Activated CD4-positive, alpha-beta T cell treated with anti-CD3 and anti-CD28 coated beads for 36 hours (primary cell): ENCODE measurements at regions of chr7 and their contacts with region 1.

Region 1: GRCh38 chr7:84876061-84876821 is 310.6 kb downstream of the SEMA3D start:
- DNase-seq: no peak
- ATAC-seq: no peak
- H3K4me3 Mint-ChIP-seq: no peak overlapping the region
- H3K27ac Mint-ChIP-seq: no peak overlapping the region
- H3K4me1 Mint-ChIP-seq: no peaks in the 10 kb centered on the region
- H3K27me3 Mint-ChIP-seq: no peaks in the 10 kb centered on the region

Region 2: DNA sequence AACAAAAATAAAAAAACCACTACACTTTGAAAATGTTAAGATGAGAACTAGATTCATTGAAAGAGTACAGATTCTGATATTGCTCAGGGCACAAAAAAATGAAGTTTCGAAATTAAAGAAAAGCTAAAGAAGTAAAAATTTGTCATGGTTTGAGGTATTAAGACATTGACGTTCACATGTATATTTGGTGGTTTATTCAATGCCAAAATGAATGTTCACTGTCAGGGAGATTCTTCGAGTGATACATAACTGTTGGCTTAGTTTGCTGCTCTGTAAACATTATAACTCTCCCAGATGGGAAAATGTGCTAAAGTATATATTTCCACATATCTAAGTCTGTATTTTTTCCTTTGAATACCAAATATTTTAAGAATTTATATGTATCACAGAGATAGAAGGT is 34.4 kb before region 1 on chr7:
- CTCF ChIA-PET with region 1: no interaction called
- POLR2A ChIA-PET with region 1: no interaction called
- intact Hi-C with region 1: loop called in 1 of 2 experiments (anchors 2 kb)
- DNase-seq: no peak
- ATAC-seq: no peak
- H3K4me3 Mint-ChIP-seq: no peak overlapping the region
- H3K27ac Mint-ChIP-seq: no peak overlapping the region
- H3K4me1 Mint-ChIP-seq: no peaks in the 10 kb centered on the region
- H3K27me3 Mint-ChIP-seq: no peaks in the 10 kb centered on the region

Region 3: GRCh38 chr7:85074016-85074415 is 197.8 kb after region 1 on chr7:
- CTCF ChIA-PET with region 1: no interaction called
- POLR2A ChIA-PET with region 1: no interaction called
- intact Hi-C with region 1: no loop called
- DNase-seq: no peak
- ATAC-seq: no peak
- H3K4me3 Mint-ChIP-seq: no peak overlapping the region
- H3K27ac Mint-ChIP-seq: no peak overlapping the region
- H3K4me1 Mint-ChIP-seq: no peaks in the 10 kb centered on the region
- H3K27me3 Mint-ChIP-seq: no peaks in the 10 kb centered on the region